Esophagus squamous epithelium (tissue), 5 donors: ENCODE measurements at regions of chr1 and their contacts with region 1.

Region 1: GRCh38 chr1:30911046-30911954 is 2.7 kb upstream of the SDC3 start:
- DNase-seq: peak; percentile 25
- H3K4me3 ChIP-seq: no peak overlapping the region
- H3K27ac ChIP-seq: no peak overlapping the region
- H3K4me1 ChIP-seq: peaks cover 8 to 47% (median 22%) of the 10 kb centered on the region in 3 donors
- H3K27me3 ChIP-seq: peaks cover 0 to 26% (median 0%) of the 10 kb centered on the region in 4 donors
- CTCF ChIP-seq: peak; percentile 70 to 93 (median 82)
- POLR2A ChIP-seq: no peak

Region 2: DNA sequence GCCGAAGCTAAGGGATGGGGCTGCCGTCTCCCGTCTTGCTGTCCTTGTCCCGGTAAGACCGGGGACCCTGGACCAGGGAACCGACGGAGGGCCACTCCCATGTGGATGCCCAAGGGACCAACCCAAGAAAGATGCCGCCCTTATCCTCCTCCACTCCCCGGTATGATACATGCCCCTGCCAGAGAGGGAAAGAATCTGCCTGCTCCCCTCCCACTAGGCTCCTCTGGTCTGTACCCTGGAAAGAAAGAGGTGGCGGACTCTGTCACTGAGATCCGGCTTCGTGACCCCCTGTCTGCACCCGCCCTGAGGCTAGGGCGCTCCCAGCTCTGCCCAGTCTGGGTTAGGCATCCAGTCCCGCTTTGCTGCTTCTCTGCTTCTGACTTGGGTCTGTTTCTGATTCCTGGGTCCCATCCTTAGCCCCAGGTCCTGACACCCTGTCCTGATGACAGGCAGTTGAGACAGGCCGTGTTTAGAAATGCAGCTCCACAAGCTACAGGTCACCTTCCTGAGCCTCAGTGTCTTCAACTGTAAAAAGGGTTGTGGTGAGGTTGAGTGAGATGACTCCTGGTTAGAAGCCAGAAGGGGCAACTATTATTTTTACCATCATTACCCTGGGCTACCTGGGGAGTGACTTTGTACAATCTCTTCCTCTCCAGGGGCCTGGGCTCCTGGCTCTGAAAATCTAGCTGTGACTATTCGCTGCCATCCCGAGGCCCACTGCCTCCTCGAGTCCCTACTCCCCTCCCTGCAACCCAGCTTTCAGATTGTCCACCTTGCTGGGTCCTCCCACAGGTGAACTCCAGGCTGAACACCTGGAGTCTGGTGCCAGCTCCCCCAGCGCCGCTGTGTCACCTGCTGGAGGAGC is 191.7 kb before region 1 on chr1:
- intact Hi-C with region 1: loop called (anchors 5 kb)
- DNase-seq: no peak
- H3K4me3 ChIP-seq: peak overlapping the region; percentile 39 to 76 (median 66)
- H3K27ac ChIP-seq: peak overlapping the region; percentile 93 to 100 (median 99)
- H3K4me1 ChIP-seq: peaks cover 0 to 26% (median 7%) of the 10 kb centered on the region in 3 donors
- H3K27me3 ChIP-seq: no peaks in the 10 kb centered on the region
- CTCF ChIP-seq: no peak
- POLR2A ChIP-seq: no peak

Region 3: DNA sequence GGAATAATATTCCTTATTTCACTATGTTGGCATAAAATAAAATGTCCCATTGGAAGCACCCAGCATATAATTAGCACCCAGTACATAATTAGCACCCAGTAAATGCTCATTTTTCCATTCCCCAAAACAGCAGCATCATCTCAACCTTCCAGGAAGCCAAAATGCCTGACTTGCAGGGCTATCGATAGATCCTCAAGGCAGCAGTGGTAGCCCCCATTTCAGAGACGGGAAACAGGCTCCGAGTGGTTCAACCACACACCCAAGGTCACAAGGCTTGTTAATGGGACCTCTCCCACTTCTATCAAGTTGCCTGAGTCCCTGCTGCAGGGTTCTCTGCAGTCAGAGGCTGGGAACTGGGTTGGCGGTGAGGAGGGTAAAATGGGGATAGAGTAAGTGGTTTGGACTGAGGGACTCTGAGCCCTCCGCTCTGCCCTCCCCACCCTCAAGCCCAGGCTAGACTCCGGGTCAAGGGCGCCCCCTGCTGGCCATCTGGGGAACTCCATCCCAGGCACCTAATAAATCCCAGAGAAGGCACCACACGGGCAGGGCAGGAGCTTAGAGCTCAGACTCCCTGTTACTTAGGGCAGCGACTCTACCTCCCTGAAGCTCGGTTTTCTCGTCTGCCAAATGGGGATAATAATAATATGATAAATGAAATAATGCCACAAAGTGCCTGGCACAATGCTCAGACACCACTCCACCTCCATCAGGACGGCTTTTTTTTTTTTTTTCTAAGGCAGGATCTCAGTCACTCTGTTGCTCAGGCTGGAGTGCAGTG is 131.8 kb before region 1 on chr1:
- intact Hi-C with region 1: loop called (anchors 5 kb)
- DNase-seq: no peak
- H3K4me3 ChIP-seq: no peak overlapping the region
- H3K27ac ChIP-seq: no peak overlapping the region
- H3K4me1 ChIP-seq: peaks cover 0 to 15% (median 5%) of the 10 kb centered on the region in 3 donors
- H3K27me3 ChIP-seq: peaks cover 0 to 40% (median 0%) of the 10 kb centered on the region in 4 donors
- CTCF ChIP-seq: peak; percentile 98 to 99 (median 98)
- POLR2A ChIP-seq: no peak

Region 4: DNA sequence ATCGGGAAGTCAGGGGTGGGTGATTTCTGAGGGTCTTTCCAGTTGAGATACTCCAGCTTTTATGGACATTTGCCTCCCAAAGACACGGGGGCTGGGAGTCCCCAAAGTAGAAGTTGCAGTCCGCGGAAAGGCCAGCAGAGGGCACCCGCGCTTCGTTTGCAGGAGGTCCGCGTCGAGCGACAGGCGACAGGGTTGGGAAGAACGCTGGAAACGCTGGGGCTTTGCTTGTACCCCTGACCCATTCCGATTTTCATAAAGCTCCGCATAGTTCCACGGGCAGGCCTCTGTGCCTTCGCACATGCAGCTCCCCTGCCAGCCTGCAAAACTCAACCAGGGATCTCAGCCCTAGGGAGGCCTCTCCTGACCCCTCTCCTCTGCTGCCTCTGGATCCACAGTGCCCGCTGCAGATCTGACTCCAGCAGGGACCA is 109.5 kb before region 1 on chr1:
- intact Hi-C with region 1: loop called (anchors 5 kb)
- DNase-seq: no peak
- H3K4me3 ChIP-seq: peak overlapping the region in 1 of 4 donors; percentile 22
- H3K27ac ChIP-seq: no peak overlapping the region
- H3K4me1 ChIP-seq: peaks cover 8 to 34% (median 9%) of the 10 kb centered on the region in 3 donors
- H3K27me3 ChIP-seq: peaks cover 0 to 48% (median 0%) of the 10 kb centered on the region in 4 donors
- CTCF ChIP-seq: peak; percentile 85 to 97 (median 90)
- POLR2A ChIP-seq: no peak